ENCODE measurements at regions of chr15 and their contacts with region 1.

Region 1: GRCh38 chr15:77870195-77871065 is 207.1 kb downstream of the TBC1D2B start:
- DNase-seq: peak; percentile 31
- ATAC-seq: peak; percentile 69
- H3K4me3 Mint-ChIP-seq: no peak overlapping the region
- H3K27ac Mint-ChIP-seq: no peak overlapping the region
- H3K4me1 Mint-ChIP-seq: no peaks in the 10 kb centered on the region
- H3K27me3 Mint-ChIP-seq: peaks cover 3% of the 10 kb centered on the region
- CTCF ChIP-seq: peak; percentile 45

Region 2: GRCh38 chr15:77633134-77633912 is 237.1 kb before region 1 on chr15:
- CTCF ChIA-PET with region 1: no interaction called
- POLR2A ChIA-PET with region 1: no interaction called
- intact Hi-C with region 1: loop called (anchors 5 kb)
- DNase-seq: peak; percentile 71
- ATAC-seq: peak; percentile 93
- H3K4me3 Mint-ChIP-seq: peak overlapping the region; percentile 75
- H3K27ac Mint-ChIP-seq: no peak overlapping the region
- H3K4me1 Mint-ChIP-seq: peaks cover 12% of the 10 kb centered on the region
- H3K27me3 Mint-ChIP-seq: peaks cover 45% of the 10 kb centered on the region
- CTCF ChIP-seq: peak; percentile 97

Measured in activated B cell treated with CpG ODN at 0.5 μM for 24 hours (primary cell).